ENCODE measurements at regions of chr4 and their contacts with region 1.

Region 1: GRCh38 chr4:37802068-37802666 is 24.3 kb upstream of the PGM2 start:
- DNase-seq: peak; percentile 87
- H3K4me3 Mint-ChIP-seq: no peak overlapping the region
- H3K27ac Mint-ChIP-seq: no peak overlapping the region
- H3K4me1 Mint-ChIP-seq: peaks cover 10% of the 10 kb centered on the region
- H3K27me3 Mint-ChIP-seq: no peaks in the 10 kb centered on the region
- CTCF ChIP-seq: peak; percentile 53

Region 2: GRCh38 chr4:37922328-37922727 is 120.2 kb after region 1 on chr4:
- CTCF ChIA-PET with region 1: no interaction called
- POLR2A ChIA-PET with region 1: no interaction called
- intact Hi-C with region 1: no loop called
- DNase-seq: peak; percentile 24
- H3K4me3 Mint-ChIP-seq: no peak overlapping the region
- H3K27ac Mint-ChIP-seq: no peak overlapping the region
- H3K4me1 Mint-ChIP-seq: peaks cover 7% of the 10 kb centered on the region
- H3K27me3 Mint-ChIP-seq: no peaks in the 10 kb centered on the region
- CTCF ChIP-seq: no peak

Region 3: DNA sequence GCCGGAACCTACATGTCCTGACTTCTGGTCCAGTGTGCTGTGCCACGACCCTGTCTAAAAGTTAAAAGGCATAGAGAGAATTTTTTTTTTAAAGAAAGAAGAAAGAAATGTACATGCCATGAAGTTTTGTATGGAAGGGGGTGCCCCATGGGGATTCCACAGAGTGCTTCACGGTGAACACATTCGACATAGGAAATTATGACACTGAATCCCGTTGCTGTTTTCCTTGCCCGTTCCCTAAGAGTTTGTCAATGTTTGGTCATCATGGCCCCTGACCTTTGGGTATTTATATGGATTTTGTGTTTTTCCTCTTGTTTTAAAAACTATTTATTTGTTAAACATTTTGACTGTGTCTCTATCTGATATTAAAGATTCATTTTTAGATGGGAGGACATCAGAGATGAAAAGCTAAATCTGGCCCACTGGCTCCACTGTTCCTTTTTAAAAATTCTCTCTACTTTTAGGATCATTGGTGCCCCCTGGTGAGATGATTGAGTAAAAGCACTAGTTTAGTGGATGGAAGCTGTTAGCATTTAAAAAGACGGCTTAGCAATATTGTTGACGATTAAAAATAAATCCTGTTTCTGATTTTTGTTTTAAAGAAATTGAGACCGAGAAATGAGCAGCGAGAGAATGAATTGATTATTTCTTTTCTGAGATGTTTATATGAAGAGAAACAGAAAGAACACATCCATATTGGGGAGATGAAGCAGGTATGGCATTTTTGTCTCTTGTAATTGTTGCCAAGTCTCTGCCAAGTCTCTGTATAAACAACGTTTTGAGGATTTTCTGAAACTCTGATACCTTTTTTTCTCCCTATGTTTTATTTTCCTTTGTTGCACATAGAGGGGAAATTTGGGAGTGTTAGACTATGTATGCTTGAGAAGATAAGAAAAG is 233.1 kb after region 1 on chr4:
- CTCF ChIA-PET with region 1: interaction called, 154 read pairs
- POLR2A ChIA-PET with region 1: interaction called, 3 read pairs
- intact Hi-C with region 1: loop called (anchors 1 kb)
- DNase-seq: peak; percentile 79
- H3K4me3 Mint-ChIP-seq: no peak overlapping the region
- H3K27ac Mint-ChIP-seq: no peak overlapping the region
- H3K4me1 Mint-ChIP-seq: no peaks in the 10 kb centered on the region
- H3K27me3 Mint-ChIP-seq: no peaks in the 10 kb centered on the region
- CTCF ChIP-seq: peak; percentile 62

Region 4: DNA sequence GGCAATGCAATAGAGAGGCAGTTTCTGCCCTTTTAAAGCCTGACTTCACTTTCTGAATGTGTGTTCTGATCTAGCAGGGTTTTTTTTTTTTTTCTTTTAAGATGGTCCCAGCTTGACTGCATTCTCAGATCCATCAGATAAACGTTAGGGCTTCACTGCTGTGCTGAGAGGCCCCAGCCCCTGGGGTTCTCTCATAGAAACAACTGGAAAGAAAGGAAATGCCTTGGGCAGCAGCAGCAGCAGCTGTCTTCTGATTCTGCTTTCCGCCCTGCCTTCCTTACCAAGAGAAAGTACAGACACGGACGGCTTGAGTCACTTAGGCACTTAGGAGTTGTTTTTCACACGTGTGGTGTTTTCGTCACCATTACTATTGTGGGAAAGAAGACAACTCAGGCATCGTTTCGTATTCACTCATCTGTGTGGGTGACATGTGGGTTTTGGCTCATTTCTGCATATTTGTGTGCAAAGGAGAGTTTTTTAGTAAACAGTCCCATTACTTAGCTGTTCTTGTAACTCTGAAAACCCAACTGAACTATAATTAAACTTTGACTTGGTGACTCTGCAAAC is 330.0 kb after region 1 on chr4:
- CTCF ChIA-PET with region 1: no interaction called
- POLR2A ChIA-PET with region 1: no interaction called
- intact Hi-C with region 1: no loop called
- DNase-seq: peak; percentile 85
- H3K4me3 Mint-ChIP-seq: peak overlapping the region; percentile 25
- H3K27ac Mint-ChIP-seq: peak overlapping the region; percentile 93
- H3K4me1 Mint-ChIP-seq: peaks cover 25% of the 10 kb centered on the region
- H3K27me3 Mint-ChIP-seq: no peaks in the 10 kb centered on the region
- CTCF ChIP-seq: no peak

Measured in MCF 10A (cell line).